AG04449 (cell line): ENCODE measurements at regions of chr6 and their contacts with region 1.

Region 1: DNA sequence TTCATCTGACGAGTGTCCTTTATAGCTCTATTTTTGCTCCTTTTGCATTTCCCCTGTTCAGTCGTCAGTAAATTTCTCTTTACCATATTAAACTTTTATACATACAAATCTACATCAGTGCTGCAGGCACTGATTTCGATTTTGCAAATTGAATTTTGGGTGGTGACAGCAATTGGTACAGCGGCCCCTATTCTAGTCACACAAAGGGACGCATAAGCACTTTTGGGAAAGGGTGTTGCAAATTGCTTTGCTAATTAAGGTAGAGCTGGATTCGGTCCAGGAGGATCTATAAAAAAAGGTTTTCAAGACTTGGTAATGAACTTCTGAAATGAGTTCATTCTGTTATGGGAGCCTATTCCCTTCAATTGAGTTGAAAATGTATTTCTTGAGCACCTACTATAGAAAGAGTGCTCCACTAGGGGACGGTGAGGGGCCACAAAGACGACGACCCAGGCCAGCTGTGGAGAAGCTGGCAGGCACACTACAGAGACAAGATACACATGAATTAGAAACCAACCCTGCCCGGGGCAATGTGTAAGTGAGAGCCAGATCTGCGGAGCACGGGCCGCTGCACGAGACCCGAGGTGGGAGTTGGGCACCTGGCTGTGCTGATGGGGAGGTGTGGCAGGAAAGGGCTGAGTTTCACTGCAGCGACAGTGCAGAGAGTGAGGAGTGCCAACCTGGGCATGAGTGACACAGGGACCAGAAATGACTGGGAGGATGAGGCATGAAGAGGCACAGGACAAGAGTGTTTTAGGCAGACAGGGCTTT is 5.4 kb downstream of the UQCC2 start:
- DNase-seq: no peak
- H3K4me3 ChIP-seq: no peak overlapping the region
- CTCF ChIP-seq: no peak

Region 2: GRCh38 chr6:33547499-33547898 is 158.6 kb before region 1 on chr6:
- CTCF ChIA-PET with region 1: no interaction called
- POLR2A ChIA-PET with region 1: no interaction called
- DNase-seq: no peak
- H3K4me3 ChIP-seq: no peak overlapping the region
- CTCF ChIP-seq: no peak

Region 3: GRCh38 chr6:33694401-33694931 is 11.7 kb before region 1 on chr6:
- CTCF ChIA-PET with region 1: interaction called, 41 read pairs
- POLR2A ChIA-PET with region 1: interaction called, 12 read pairs
- DNase-seq: peak; percentile 17
- H3K4me3 ChIP-seq: no peak overlapping the region
- CTCF ChIP-seq: no peak

Region 4: GRCh38 chr6:33910594-33910993 is 204.5 kb after region 1 on chr6:
- CTCF ChIA-PET with region 1: no interaction called
- POLR2A ChIA-PET with region 1: no interaction called
- DNase-seq: no peak
- H3K4me3 ChIP-seq: no peak overlapping the region
- CTCF ChIP-seq: no peak